ENCODE measurements at regions of chr19 and their contacts with region 1.

Region 1: DNA sequence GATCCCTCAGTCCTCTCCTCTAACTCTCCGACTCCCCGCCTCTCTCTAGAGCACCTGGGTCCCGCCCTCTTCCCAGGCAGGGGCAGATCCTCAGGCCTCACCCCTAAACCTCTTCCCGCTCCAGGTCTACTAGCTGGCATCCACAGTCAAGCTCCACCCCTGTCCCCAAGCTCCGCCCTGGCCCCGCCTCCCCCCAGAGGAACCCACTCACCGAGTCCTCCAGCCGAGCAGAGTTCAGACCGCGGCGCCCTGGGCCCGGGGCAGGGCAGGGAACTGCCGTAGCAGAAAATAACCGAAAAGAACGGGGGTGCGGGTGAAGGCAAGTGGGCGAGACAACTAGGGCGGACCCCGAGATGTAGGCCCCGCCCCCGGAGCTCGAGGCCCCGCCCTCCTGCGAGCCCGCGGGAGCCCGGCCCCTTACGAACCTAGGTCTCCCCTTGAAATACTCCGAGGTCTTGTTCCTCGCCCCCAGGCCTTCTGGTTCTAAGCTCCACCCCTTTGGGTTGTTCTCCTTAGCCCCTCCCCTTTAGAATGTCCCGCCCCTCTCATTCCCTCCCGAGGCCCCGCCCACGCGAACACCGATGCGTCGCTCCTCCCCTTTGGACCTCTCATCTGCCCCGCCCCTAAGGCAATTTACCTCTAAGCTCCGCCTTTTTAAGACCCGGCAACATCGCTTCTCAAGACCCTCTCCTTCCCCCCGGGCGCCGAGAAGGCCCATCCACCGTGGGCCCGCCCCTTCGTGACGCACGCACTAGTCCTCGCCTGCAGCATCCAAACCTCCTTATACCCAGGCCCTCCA is at the start of gene GGN:
- DNase-seq: peak; percentile 74
- H3K4me3 ChIP-seq: peak within 1 kb of the TSS; percentile 91
- H3K27me3 ChIP-seq: no peaks in the 10 kb centered on the region
- CTCF ChIP-seq: no peak
- polyA plus RNA-seq, gene GGN: 0.44 and 0.64 TPM in 2 replicates

Region 2: DNA sequence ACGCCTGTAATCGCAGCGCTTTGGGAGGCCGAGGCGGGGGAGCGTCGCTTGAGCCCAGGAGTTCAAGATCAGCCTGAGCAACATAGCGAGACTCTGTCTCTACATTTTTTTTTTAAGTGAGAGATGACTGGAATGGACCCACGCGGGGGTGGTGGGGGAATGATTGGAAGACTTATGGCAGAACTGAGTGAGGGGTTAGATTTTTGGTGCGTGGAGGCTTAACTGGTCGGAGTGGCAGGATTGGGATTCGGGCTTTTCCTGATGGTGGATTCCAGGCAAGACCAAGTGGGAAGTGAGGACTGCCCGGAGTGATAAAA is 12.6 kb before region 1 on chr19:
- CTCF ChIA-PET with region 1: interaction called, 12 read pairs
- POLR2A ChIA-PET with region 1: interaction called, 18 read pairs
- DNase-seq: no peak
- H3K4me3 ChIP-seq: peak overlapping the region; percentile 75
- H3K27me3 ChIP-seq: no peaks in the 10 kb centered on the region
- CTCF ChIP-seq: no peak

Region 3: DNA sequence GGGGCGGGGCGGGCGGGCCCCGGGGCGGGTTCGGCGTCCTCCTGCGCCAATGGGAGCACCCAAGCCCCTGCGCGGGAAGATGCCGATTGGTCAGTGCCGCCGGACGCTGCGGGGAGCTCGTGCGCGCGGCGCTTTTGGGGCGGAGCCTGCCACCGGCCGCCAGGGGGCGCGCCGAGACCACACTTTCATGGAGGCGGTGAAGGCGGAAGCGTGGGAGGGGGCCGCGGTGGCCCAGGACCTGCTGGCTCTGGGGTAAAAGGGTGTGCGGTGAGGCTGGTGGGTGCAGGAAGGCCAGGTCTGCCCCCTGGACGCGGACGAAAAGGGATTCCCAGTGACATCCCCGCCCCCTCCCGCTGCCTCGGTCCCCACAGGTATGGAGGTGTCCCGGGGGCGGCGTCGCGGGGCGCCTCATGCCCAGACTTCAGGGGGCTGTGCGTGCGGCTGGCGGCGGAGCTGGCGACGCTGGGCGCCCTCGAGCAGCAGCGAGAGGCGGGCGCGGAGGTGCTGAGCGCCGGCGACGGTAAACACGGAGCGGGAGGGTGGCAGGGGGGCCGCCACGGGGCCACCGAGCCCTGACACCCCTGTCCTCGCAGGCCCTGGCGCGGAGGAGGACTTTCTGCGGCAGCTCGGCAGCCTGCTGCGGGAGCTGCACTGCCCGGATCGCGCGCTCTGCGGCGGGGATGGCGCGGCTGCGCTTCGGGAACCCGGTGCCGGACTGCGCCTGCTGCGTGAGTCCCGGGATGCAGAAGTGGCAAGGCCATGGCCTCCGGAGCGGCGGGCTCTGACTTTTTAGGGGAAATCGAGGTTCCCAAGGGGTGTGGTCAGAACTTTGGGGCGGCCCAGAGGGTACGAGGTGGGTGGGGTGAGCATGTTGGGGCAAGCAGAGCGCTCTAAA is 15.5 kb after region 1 on chr19 and contains the start of gene FAM98C:
- CTCF ChIA-PET with region 1: interaction called, 20 read pairs
- POLR2A ChIA-PET with region 1: interaction called, 4 read pairs
- DNase-seq: peak; percentile 65
- H3K4me3 ChIP-seq: peak within 1 kb of the TSS; percentile 88
- H3K27me3 ChIP-seq: no peaks in the 10 kb centered on the region
- CTCF ChIP-seq: peak; percentile 74
- polyA plus RNA-seq, gene FAM98C: 9.9 and 12.2 TPM in 2 replicates

Region 4: GRCh38 chr19:38496603-38497487 is 109.1 kb after region 1 on chr19:
- CTCF ChIA-PET with region 1: no interaction called
- POLR2A ChIA-PET with region 1: no interaction called
- DNase-seq: no peak
- H3K4me3 ChIP-seq: no peak overlapping the region
- H3K27me3 ChIP-seq: no peaks in the 10 kb centered on the region
- CTCF ChIP-seq: no peak

Region 5: GRCh38 chr19:38989066-38989605 is 601.4 kb after region 1 on chr19:
- CTCF ChIA-PET with region 1: no interaction called
- POLR2A ChIA-PET with region 1: interaction called, 23 read pairs
- DNase-seq: no peak
- H3K4me3 ChIP-seq: no peak overlapping the region
- H3K27me3 ChIP-seq: peaks cover 3% of the 10 kb centered on the region; the same call in 1 of the 2 replicates
- CTCF ChIP-seq: no peak

Measured in BJ (cell line).